ENCODE measurements at regions of chr3 and their contacts with region 1.

Region 1: GRCh38 chr3:129824926-129825541 is 68.5 kb downstream of the TMCC1 start:
- DNase-seq: no peak
- H3K4me3 ChIP-seq: no peak overlapping the region
- H3K27ac ChIP-seq: no peak overlapping the region
- H3K4me1 ChIP-seq: peaks cover 4% of the 10 kb centered on the region
- H3K27me3 ChIP-seq: no peaks in the 10 kb centered on the region
- CTCF ChIP-seq: peak; percentile 60 to 69 (median 65)
- POLR2A ChIP-seq: no peak

Region 2: DNA sequence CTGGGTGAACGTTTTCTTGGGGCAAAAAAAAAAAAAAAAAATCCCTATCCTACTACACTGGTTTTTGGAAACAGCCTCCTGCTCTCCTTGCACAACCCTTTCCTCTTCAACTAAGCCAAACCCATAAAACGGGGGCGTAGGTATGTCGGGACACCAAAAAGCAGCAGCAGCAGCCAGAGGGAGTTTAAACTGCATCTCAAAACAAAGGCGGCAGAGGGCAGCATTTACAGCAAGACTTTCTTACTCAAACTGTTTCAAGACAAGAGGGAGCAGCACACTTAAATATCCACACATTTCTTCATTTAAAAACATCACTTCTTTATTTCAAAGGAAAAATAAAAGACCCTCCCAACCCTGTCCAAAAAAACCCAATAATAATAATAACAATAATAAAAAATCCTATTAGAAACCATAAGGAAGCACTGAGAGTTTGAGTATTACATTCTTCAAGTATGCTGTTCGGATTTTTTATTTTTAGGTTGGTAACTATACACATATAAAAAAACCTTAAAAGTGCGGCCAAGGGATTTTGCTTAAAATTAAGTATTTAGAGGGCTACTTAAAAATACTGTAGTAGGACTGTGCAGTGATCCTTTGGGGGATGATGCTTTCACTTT is 174.7 kb before region 1 on chr3:
- intact Hi-C with region 1: loop called (anchors 10 kb)
- DNase-seq: peak; percentile 86
- H3K4me3 ChIP-seq: no peak overlapping the region
- H3K27ac ChIP-seq: no peak overlapping the region
- H3K4me1 ChIP-seq: peaks cover 7% of the 10 kb centered on the region
- H3K27me3 ChIP-seq: no peaks in the 10 kb centered on the region
- CTCF ChIP-seq: peak; percentile 58 to 73 (median 66)
- POLR2A ChIP-seq: no peak